ENCODE measurements at regions of chr12 and their contacts with region 1.

Region 1: DNA sequence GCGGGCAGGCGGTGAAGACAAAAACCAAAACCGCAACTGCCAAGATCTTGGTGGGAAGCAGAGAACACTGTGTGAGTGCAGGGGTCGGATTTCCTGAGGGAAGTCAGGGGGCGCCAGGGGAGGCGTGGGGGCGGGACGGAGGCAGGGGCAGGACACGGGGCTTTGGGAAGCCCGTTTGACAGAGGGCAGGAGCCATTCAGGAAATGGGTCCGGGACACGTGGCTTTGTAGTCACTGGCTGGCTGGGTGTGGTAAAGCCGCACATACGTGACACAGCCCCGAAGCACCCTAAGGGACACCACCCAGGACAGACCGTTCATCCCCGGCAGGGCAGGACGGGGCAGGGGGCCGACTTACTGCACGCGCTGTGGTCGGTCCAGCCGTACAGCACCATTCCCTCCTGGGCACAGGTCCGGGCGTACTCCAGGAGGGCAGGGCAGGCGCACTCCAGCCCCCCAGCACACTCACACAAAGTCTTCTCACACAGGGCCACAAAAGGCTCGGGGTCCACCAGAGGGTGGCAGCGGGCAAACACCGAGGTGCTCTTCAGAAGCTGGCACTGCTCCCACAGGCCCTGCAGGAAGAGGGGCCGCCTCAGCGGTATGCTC is 49.4 kb downstream of the VWF start:
- DNase-seq: peak in 6 of 9 donors; percentile 30 to 48 (median 40)
- ATAC-seq: peak; percentile 84
- H3K4me3 ChIP-seq: peak overlapping the region; percentile 32
- H3K4me3 Mint-ChIP-seq: peak overlapping the region; percentile 83 to 94 (median 89)
- H3K27ac ChIP-seq: no peak overlapping the region
- H3K27ac Mint-ChIP-seq: peak overlapping the region in 7 of 9 donors; percentile 32 to 94 (median 52)
- H3K4me1 ChIP-seq: peaks cover 9 to 18% of the 10 kb centered on the region in 2 donors
- H3K4me1 Mint-ChIP-seq: peaks cover 23 to 29% (median 27%) of the 10 kb centered on the region in 7 donors
- H3K27me3 ChIP-seq: no peaks in the 10 kb centered on the region
- H3K27me3 Mint-ChIP-seq: peaks cover 0 to 30% (median 5%) of the 10 kb centered on the region in 5 donors

Region 2: DNA sequence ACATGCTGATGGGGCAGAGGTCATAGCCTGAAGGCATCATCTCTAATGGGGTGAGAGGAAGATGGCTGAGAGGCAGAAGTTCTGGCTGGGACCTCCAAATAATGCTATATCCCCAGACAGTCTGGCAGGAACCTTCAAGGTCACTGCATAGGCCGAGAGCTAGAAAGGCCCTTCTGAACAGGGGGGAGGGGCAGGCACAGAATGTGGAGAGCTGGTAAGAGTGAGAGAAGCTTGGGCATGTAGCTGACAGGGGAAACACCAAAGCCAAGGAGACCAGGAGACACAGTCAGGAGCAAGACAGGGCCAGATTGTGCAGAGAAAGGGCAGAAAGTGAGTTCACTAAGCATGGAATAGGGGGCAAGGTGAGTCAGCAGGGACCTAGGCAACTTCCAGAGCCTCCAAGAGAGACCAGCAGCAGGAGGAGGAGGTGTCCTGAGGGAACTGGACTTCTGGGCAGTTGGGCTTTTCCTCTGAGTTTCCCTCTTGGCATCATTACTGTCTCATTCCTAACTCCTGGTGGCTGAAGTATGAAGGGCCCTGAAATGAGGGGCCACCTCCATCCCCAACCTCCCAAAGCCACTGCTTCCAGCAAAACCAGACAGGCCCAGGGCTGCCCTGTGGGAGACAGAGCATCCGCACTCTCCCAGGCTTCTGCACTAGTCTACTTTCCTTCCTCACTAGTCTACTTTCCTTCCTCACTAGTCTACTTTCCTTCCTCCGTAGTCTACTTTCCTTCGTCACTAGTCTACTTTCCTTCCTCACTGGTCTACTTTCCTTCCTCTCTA is 147.2 kb before region 1 on chr12:
- CTCF ChIA-PET with region 1: no interaction called
- POLR2A ChIA-PET with region 1: no interaction called
- intact Hi-C with region 1: no loop called
- DNase-seq: no peak
- ATAC-seq: no peak
- H3K4me3 ChIP-seq: no peak overlapping the region
- H3K4me3 Mint-ChIP-seq: no peak overlapping the region
- H3K27ac ChIP-seq: no peak overlapping the region
- H3K27ac Mint-ChIP-seq: no peak overlapping the region
- H3K4me1 ChIP-seq: no peaks in the 10 kb centered on the region
- H3K4me1 Mint-ChIP-seq: no peaks in the 10 kb centered on the region
- H3K27me3 ChIP-seq: no peaks in the 10 kb centered on the region
- H3K27me3 Mint-ChIP-seq: peaks cover 0 to 44% (median 39%) of the 10 kb centered on the region in 5 donors

Region 3: GRCh38 chr12:6230321-6231110 is 155.4 kb after region 1 on chr12:
- CTCF ChIA-PET with region 1: no interaction called
- POLR2A ChIA-PET with region 1: no interaction called
- intact Hi-C with region 1: loop called in 1 of 2 experiments (anchors 1 kb)
- DNase-seq: peak; percentile 33 to 77 (median 70)
- ATAC-seq: peak; percentile 95
- H3K4me3 ChIP-seq: no peak overlapping the region
- H3K4me3 Mint-ChIP-seq: peak overlapping the region; percentile 53 to 82 (median 72)
- H3K27ac ChIP-seq: peak overlapping the region; percentile 53
- H3K27ac Mint-ChIP-seq: peak overlapping the region; percentile 70 to 98 (median 94)
- H3K4me1 ChIP-seq: peaks cover 21 to 27% of the 10 kb centered on the region in 2 donors
- H3K4me1 Mint-ChIP-seq: peaks cover 22 to 43% (median 33%) of the 10 kb centered on the region in 7 donors
- H3K27me3 ChIP-seq: no peaks in the 10 kb centered on the region
- H3K27me3 Mint-ChIP-seq: peaks cover 0 to 2% (median 0%) of the 10 kb centered on the region in 5 donors